Caco-2 (cell line): ENCODE measurements at regions of chr15 and their contacts with region 1.

Region 1: DNA sequence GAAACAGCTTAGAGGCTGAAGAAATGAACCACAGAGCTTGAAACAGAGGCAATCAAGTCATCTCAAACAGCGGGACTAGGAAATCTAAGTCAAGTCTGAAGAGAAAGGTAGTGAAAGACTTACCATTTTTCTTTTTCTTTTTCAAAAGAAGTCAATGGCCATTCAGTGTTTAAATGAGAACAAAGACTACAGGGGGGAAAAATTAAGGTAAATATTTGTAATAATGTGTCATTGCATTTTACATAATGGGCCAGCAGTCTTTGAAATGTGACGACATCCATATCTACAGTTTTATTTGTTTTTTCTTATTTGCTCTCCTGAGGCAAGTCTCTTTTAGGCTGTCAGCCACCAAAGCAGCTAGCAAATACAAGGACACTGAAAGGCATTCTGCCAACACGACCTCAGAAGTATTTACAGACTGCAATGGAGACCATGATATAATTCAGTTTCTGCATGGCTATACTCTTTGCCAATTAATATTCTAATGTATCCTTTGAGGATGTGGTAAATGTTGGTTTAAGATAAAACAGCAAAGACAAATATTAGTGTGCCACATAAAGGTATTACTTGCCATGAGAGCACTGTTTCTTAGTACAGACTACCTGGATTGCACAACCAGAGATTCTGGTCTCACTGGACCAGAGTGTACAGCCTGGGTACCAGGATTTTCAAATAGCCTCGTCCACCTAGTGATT is 307.0 kb upstream of the THBS1 start:
- DNase-seq: peak; percentile 81 to 82
- H3K4me3 ChIP-seq: no peak overlapping the region
- H3K4me3 Mint-ChIP-seq: peak overlapping the region; percentile 51
- H3K27ac Mint-ChIP-seq: peak overlapping the region; percentile 69
- H3K4me1 ChIP-seq: peaks cover 60% of the 10 kb centered on the region
- H3K4me1 Mint-ChIP-seq: peaks cover 48% of the 10 kb centered on the region
- H3K27me3 ChIP-seq: no peaks in the 10 kb centered on the region
- H3K27me3 Mint-ChIP-seq: no peaks in the 10 kb centered on the region
- CTCF ChIP-seq: no peak

Region 2: DNA sequence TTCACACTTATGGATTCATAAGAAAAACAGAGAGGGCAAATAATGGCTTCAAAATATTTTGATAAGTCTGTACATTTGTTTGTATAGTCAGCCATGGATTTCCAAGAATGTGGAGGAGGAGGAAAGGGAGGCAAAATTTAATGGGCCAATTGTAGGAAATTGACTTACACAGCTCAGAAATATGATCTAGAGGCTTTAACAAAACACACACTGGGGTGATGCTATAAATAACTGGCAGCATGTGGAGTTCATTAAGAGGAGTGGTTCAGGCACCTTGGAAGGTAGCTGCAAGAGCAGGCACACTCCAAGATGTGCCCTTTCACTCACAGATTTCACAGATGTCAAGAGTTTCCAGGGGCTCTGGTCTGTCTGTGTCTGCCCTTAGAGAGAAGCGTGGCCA is 515.8 kb before region 1 on chr15:
- CTCF ChIA-PET with region 1: no interaction called
- POLR2A ChIA-PET with region 1: no interaction called
- intact Hi-C with region 1: no loop called
- DNase-seq: no peak
- H3K4me3 ChIP-seq: no peak overlapping the region
- H3K4me3 Mint-ChIP-seq: no peak overlapping the region
- H3K27ac Mint-ChIP-seq: no peak overlapping the region
- H3K4me1 ChIP-seq: no peaks in the 10 kb centered on the region
- H3K4me1 Mint-ChIP-seq: peaks cover 6% of the 10 kb centered on the region
- H3K27me3 ChIP-seq: no peaks in the 10 kb centered on the region
- H3K27me3 Mint-ChIP-seq: peaks cover 5% of the 10 kb centered on the region
- CTCF ChIP-seq: no peak

Region 3: DNA sequence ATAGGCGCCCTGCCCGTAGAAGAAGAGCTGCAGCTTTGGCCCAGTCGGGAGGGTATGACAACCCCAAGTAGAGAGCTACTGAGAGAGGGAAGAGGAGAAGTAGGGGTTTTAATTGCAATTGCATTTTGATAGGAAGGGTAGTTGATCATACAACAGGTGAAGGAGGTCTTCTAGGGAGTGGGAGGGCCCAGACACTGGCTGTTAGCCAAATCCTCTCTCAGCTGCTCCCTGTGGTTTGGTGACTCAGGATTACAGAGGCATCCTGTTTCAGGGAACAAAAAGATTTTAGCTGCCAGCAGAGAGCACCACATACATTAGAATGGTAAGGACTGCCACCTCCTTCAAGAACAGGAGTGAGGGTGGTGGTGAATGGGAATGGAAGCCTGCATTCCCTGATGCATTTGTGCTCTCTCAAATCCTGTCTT is 101.9 kb before region 1 on chr15:
- CTCF ChIA-PET with region 1: no interaction called
- POLR2A ChIA-PET with region 1: no interaction called
- intact Hi-C with region 1: loop called (anchors 1 kb)
- DNase-seq: peak; percentile 71
- H3K4me3 ChIP-seq: no peak overlapping the region
- H3K4me3 Mint-ChIP-seq: no peak overlapping the region
- H3K27ac Mint-ChIP-seq: peak overlapping the region; percentile 19
- H3K4me1 ChIP-seq: peaks cover 16% of the 10 kb centered on the region
- H3K4me1 Mint-ChIP-seq: peaks cover 19% of the 10 kb centered on the region
- H3K27me3 ChIP-seq: no peaks in the 10 kb centered on the region
- H3K27me3 Mint-ChIP-seq: no peaks in the 10 kb centered on the region
- CTCF ChIP-seq: peak in 1 of 2 experiments; percentile 28

Region 4: DNA sequence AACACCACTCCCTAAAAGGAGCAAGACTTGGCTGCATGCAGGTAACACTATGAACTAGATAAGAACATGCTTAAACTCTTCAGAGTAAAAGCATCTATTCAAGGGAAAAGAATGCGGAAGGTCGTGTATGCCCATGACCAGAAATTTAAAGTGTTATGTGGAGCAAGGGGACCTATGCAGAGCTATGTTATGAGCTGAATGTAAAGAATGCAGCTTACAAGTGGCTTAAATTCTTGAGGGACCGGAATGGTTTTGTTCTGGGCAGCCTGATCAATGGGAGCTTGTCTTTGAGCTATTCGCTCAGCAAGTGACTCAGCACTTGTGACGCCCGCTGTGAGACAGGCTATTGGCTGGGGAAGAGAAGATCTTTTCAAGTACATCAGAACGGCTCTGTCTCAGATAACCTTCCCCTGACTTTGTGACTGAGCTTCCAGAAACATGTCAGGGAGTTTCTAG is 60.5 kb before region 1 on chr15:
- CTCF ChIA-PET with region 1: no interaction called
- POLR2A ChIA-PET with region 1: interaction called, 8 read pairs
- intact Hi-C with region 1: loop called (anchors 1 kb)
- DNase-seq: peak; percentile 82 to 92
- H3K4me3 ChIP-seq: no peak overlapping the region
- H3K4me3 Mint-ChIP-seq: peak overlapping the region; percentile 57
- H3K27ac Mint-ChIP-seq: peak overlapping the region; percentile 97
- H3K4me1 ChIP-seq: peaks cover 17% of the 10 kb centered on the region
- H3K4me1 Mint-ChIP-seq: peaks cover 19% of the 10 kb centered on the region
- H3K27me3 ChIP-seq: no peaks in the 10 kb centered on the region
- H3K27me3 Mint-ChIP-seq: no peaks in the 10 kb centered on the region
- CTCF ChIP-seq: no peak

Region 5: DNA sequence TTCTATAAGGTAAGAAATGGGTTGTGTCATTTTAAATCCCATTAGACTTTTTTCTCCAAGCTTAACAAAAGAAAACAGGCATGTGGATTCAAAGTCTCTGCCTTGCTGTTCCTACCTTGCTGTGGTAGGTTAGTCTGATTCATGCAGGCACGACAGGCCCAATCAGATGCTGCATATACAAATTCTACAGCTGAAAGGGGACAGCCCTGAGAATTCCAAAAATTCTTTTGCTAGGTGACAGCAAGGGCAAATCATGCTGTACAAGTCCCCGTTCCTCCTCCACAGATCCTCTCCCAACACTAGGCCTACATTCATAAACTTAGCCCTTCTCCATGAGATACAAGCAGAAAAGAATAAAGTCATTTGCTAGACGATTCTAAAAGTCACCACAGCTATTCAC is 145.8 kb after region 1 on chr15:
- CTCF ChIA-PET with region 1: no interaction called
- POLR2A ChIA-PET with region 1: no interaction called
- intact Hi-C with region 1: loop called (anchors 5 kb)
- DNase-seq: peak; percentile 67 to 79
- H3K4me3 ChIP-seq: peak overlapping the region; percentile 41
- H3K4me3 Mint-ChIP-seq: peak overlapping the region; percentile 74
- H3K27ac Mint-ChIP-seq: peak overlapping the region; percentile 89
- H3K4me1 ChIP-seq: peaks cover 18% of the 10 kb centered on the region
- H3K4me1 Mint-ChIP-seq: peaks cover 7% of the 10 kb centered on the region
- H3K27me3 ChIP-seq: no peaks in the 10 kb centered on the region
- H3K27me3 Mint-ChIP-seq: no peaks in the 10 kb centered on the region
- CTCF ChIP-seq: no peak

Region 6: DNA sequence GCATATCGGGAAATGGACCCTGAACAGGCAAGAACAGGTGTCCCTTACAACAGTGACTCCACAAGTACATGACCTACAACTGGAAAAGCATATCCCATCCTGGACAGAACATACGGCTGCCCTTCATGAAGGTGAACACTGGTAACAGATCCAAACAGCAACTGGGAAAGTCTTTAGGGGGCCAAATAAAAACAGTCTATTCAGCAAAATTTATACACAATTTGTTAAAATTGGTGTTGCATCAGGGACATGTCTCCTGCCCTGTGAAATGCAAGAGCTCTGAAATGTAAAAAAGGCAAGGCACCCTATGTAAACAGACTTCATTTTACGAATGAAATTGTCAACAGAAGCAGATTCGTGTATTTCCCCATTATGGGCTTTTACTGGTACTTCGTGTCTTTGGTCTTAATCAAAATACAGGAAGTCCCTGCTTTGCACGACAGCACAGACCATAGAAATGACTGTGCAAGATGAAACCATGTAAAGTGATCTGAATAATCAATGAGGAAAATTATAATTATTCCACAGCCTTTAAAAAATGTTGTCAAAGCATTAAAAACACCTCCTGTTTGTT is 179.7 kb after region 1 on chr15:
- CTCF ChIA-PET with region 1: no interaction called
- POLR2A ChIA-PET with region 1: interaction called, 4 read pairs
- intact Hi-C with region 1: loop called (anchors 1 kb)
- DNase-seq: no peak
- H3K4me3 ChIP-seq: no peak overlapping the region
- H3K4me3 Mint-ChIP-seq: no peak overlapping the region
- H3K27ac Mint-ChIP-seq: no peak overlapping the region
- H3K4me1 ChIP-seq: peaks cover 28% of the 10 kb centered on the region
- H3K4me1 Mint-ChIP-seq: peaks cover 28% of the 10 kb centered on the region
- H3K27me3 ChIP-seq: no peaks in the 10 kb centered on the region
- H3K27me3 Mint-ChIP-seq: no peaks in the 10 kb centered on the region
- CTCF ChIP-seq: no peak